ENCODE measurements at regions of chr4 and their contacts with region 1.

Region 1: DNA sequence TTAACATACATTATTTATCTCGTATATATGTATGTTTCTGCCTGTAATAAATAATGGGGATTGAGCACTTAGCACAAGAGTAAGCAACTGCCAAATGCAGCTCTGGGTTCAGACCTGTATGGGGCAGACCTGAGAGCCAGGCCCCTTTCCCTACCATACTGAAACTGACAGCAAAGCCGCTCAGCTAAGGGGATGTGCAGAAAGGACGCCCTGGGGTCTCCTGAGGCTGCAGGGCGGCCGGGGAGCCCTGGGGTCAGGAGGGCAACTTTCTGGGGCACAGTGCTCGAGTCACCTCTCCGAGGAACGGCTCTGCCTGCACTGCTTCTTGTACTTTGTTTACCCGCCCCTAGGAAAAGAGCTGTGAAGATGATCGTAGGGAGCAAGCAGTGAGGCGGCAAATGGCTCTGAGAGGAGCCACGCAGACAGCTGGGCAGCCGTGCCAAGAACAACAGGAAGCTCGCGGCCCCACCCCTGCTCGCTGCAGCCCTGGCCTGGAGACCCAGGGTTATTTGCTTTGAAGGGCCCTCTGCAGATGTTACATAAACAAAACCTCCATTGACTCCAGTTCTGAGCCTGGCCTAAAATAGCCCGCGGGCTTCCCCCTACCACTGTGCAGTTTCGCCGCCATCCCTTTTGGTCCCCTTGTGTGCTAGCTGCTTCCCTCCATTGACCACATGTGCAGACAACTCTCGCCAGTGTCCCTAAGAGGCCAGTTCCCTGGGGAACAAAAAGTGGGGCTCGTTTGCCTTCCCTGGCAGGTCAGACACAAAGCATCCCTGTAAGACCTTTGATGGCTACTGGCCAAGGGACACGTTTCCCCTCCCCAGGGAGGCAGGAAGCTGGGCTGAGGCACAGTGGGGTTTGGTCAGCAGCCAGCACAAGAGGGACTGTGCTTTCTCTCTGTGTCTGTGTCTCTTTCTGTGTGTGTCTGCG is 111.3 kb upstream of the LNX1 start:
- DNase-seq: peak; percentile 63
- ATAC-seq: peak; percentile 90
- H3K4me3 ChIP-seq: peak overlapping the region; percentile 50 to 68 (median 56)
- H3K27ac ChIP-seq: no peak overlapping the region
- H3K4me1 ChIP-seq: peaks cover 27% of the 10 kb centered on the region
- H3K27me3 ChIP-seq: no peaks in the 10 kb centered on the region
- CTCF ChIP-seq: no peak
- EP300 ChIP-seq: no peak
- POLR2A ChIP-seq: no peak
- RAD21 ChIP-seq: no peak

Region 2: GRCh38 chr4:53490965-53491622 is 211.5 kb before region 1 on chr4:
- CTCF ChIA-PET with region 1: no interaction called
- POLR2A ChIA-PET with region 1: no interaction called
- in situ Hi-C with region 1: no loop called
- intact Hi-C with region 1: loop called (anchors 10 kb)
- DNase-seq: peak; percentile 40
- ATAC-seq: peak; percentile 75
- H3K4me3 ChIP-seq: no peak overlapping the region
- H3K27ac ChIP-seq: no peak overlapping the region
- H3K4me1 ChIP-seq: no peaks in the 10 kb centered on the region
- H3K27me3 ChIP-seq: no peaks in the 10 kb centered on the region; a peak in 1 of 5 replicates
- CTCF ChIP-seq: peak; percentile 59
- EP300 ChIP-seq: no peak
- POLR2A ChIP-seq: no peak
- RAD21 ChIP-seq: no peak

Region 3: GRCh38 chr4:53671757-53672156 is 30.8 kb before region 1 on chr4:
- CTCF ChIA-PET with region 1: no interaction called
- POLR2A ChIA-PET with region 1: no interaction called
- in situ Hi-C with region 1: no loop called
- intact Hi-C with region 1: no loop called
- DNase-seq: no peak
- ATAC-seq: no peak
- H3K4me3 ChIP-seq: no peak overlapping the region
- H3K27ac ChIP-seq: no peak overlapping the region
- H3K4me1 ChIP-seq: no peaks in the 10 kb centered on the region
- H3K27me3 ChIP-seq: no peaks in the 10 kb centered on the region
- CTCF ChIP-seq: no peak
- EP300 ChIP-seq: no peak
- POLR2A ChIP-seq: no peak
- RAD21 ChIP-seq: no peak

Region 4: GRCh38 chr4:54228056-54228527 is 525.5 kb after region 1 on chr4:
- CTCF ChIA-PET with region 1: interaction called, 15 read pairs
- POLR2A ChIA-PET with region 1: no interaction called
- in situ Hi-C with region 1: loop called (anchors 5 kb)
- intact Hi-C with region 1: no loop called
- DNase-seq: peak; percentile 5
- ATAC-seq: peak; percentile 55
- H3K4me3 ChIP-seq: peak overlapping the region in 1 of 3 experiments; percentile 48; a peak in 1 of 6 replicates
- H3K27ac ChIP-seq: no peak overlapping the region
- H3K4me1 ChIP-seq: peaks cover 33% of the 10 kb centered on the region
- H3K27me3 ChIP-seq: peaks cover 18 to 83% of the 10 kb centered on the region in 2 experiments
- CTCF ChIP-seq: peak; percentile 87
- EP300 ChIP-seq: no peak
- POLR2A ChIP-seq: no peak
- RAD21 ChIP-seq: peak; percentile 74